Activated naive CD4-positive, alpha-beta T cell treated with anti-CD3 and anti-CD28 coated beads for 36 hours (primary cell): ENCODE measurements at regions of chr3 and their contacts with region 1.

Region 1: GRCh38 chr3:1275495-1275894 is 182.7 kb downstream of the CNTN6 start:
- DNase-seq: peak; percentile 6
- H3K4me3 Mint-ChIP-seq: no peak overlapping the region
- H3K27ac Mint-ChIP-seq: no peak overlapping the region
- H3K4me1 Mint-ChIP-seq: no peaks in the 10 kb centered on the region
- H3K27me3 Mint-ChIP-seq: no peaks in the 10 kb centered on the region

Region 2: GRCh38 chr3:1262246-1262645 is 13.2 kb before region 1 on chr3:
- CTCF ChIA-PET with region 1: no interaction called
- intact Hi-C with region 1: loop called (anchors 1 kb)
- DNase-seq: no peak
- H3K4me3 Mint-ChIP-seq: no peak overlapping the region
- H3K27ac Mint-ChIP-seq: no peak overlapping the region
- H3K4me1 Mint-ChIP-seq: no peaks in the 10 kb centered on the region
- H3K27me3 Mint-ChIP-seq: no peaks in the 10 kb centered on the region

Region 3: GRCh38 chr3:1365525-1365924 is 90.0 kb after region 1 on chr3:
- CTCF ChIA-PET with region 1: no interaction called
- intact Hi-C with region 1: no loop called
- DNase-seq: no peak
- H3K4me3 Mint-ChIP-seq: no peak overlapping the region
- H3K27ac Mint-ChIP-seq: no peak overlapping the region
- H3K4me1 Mint-ChIP-seq: no peaks in the 10 kb centered on the region
- H3K27me3 Mint-ChIP-seq: no peaks in the 10 kb centered on the region